Caco-2 (cell line): ENCODE measurements at regions of chr12 and their contacts with region 1.

Region 1: GRCh38 chr12:642633-643474 is 20.4 kb downstream of the NINJ2 start:
- DNase-seq: peak; percentile 90 to 93
- H3K4me3 ChIP-seq: peak overlapping the region; percentile 56
- H3K4me3 Mint-ChIP-seq: peak overlapping the region; percentile 78
- H3K27ac Mint-ChIP-seq: peak overlapping the region; percentile 62
- H3K4me1 ChIP-seq: peaks cover 20% of the 10 kb centered on the region
- H3K4me1 Mint-ChIP-seq: peaks cover 34% of the 10 kb centered on the region
- H3K27me3 ChIP-seq: no peaks in the 10 kb centered on the region
- H3K27me3 Mint-ChIP-seq: no peaks in the 10 kb centered on the region
- CTCF ChIP-seq: peak; percentile 74 to 89

Region 2: DNA sequence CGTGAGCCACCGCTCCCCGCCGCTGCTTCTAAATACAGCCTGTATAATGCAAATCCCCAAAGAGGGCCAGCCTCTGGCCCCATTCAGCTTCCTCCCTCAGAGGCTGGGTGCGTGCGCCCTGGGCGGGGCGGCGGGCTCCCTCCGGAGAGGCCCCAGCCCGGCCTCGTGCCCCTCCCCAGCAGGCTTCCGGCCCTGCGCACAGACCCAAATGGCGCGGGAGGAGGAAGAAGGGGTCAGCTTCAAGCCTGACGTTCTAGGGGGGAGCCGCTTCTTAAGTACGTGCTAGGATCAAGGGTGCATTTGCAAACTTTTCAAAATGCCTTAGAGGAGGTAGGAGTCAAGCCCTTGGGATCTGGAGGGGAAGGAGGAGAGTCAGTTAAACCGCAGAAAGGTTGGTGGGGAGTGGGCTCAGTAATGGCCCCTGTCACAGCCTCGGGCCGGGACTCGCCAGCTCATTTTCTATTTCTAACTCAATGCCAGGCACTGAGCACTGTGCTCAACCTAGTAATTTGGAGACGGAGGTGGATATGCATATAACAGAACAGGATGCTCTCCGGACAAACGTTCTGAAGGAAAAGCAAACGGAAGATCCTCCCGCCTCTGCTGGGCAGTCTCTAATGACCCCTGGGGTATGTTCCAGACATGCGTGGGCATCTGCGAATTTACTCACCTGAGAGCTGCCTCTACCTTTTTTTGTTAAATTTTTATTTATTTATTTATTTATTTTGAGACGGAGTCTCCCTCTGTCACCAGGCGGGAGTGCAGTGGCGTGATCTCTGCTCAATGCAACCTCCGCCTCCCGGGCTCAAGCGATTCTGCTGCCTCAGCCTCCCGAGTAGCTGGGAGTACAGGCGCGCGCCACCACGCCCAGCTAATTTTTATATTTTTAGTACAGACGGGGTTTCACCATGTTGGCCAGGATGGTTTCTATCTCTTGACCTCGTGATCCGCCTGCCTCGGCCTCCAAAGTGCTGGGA is 11.9 kb before region 1 on chr12:
- CTCF ChIA-PET with region 1: interaction called, 9 read pairs
- POLR2A ChIA-PET with region 1: interaction called, 11 read pairs
- intact Hi-C with region 1: loop called (anchors 1 kb)
- DNase-seq: no peak
- H3K4me3 ChIP-seq: no peak overlapping the region
- H3K4me3 Mint-ChIP-seq: peak overlapping the region; percentile 56
- H3K27ac Mint-ChIP-seq: peak overlapping the region; percentile 88
- H3K4me1 ChIP-seq: peaks cover 67% of the 10 kb centered on the region
- H3K4me1 Mint-ChIP-seq: peaks cover 57% of the 10 kb centered on the region
- H3K27me3 ChIP-seq: no peaks in the 10 kb centered on the region
- H3K27me3 Mint-ChIP-seq: no peaks in the 10 kb centered on the region
- CTCF ChIP-seq: no peak